ENCODE measurements at regions of chr11 and their contacts with region 1.

Region 1: GRCh38 chr11:11798586-11799438 is 43.0 kb upstream of the USP47 start:
- DNase-seq: peak; percentile 78
- ATAC-seq: peak; percentile 99
- H3K4me3 ChIP-seq: no peak overlapping the region
- H3K27ac ChIP-seq: no peak overlapping the region
- H3K4me1 ChIP-seq: peaks cover 2% of the 10 kb centered on the region
- H3K27me3 ChIP-seq: peaks cover 10% of the 10 kb centered on the region
- CTCF ChIP-seq: peak; percentile 90
- POLR2A ChIP-seq: 0 out of 2 replicates have a peak, but pooled peaks have one; percentile 31
- RAD21 ChIP-seq: peak; percentile 87

Region 2: DNA sequence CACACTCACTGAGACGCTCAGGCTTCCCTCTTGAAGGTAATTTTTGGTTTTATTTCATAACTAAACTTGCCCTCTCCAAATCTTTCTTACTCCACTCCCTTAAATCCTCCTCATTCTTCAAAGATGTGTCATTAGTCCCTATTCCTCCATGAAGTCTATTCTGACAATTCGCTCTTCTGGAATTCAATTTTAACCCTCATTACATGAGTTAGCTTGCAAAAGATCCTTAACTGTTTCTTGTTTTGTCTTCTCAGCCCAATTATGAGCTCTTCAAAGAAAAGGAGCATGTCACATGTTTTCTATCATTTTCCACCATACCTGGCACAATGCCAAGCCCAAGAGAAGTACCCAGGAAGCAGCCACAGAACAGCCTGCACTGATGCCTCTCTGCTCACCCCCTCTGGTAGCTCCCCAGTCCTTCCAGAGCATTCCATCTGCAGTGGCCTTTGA is 190.0 kb before region 1 on chr11:
- CTCF ChIA-PET with region 1: no interaction called
- POLR2A ChIA-PET with region 1: no interaction called
- dilution Hi-C with region 1: no loop called
- in situ Hi-C with region 1: no loop called
- intact Hi-C with region 1: no loop called
- DNase-seq: peak; percentile 71
- ATAC-seq: peak; percentile 86
- H3K4me3 ChIP-seq: no peak overlapping the region
- H3K27ac ChIP-seq: no peak overlapping the region
- H3K4me1 ChIP-seq: peaks cover 2% of the 10 kb centered on the region; the same call in 1 of the 2 replicates
- H3K27me3 ChIP-seq: no peaks in the 10 kb centered on the region; the same call in 1 of the 2 replicates
- CTCF ChIP-seq: no peak
- POLR2A ChIP-seq: no peak
- RAD21 ChIP-seq: no peak

Region 3: GRCh38 chr11:11841723-11842420 is 43.1 kb after region 1 on chr11 and contains the start of gene USP47:
- CTCF ChIA-PET with region 1: interaction called, 6 read pairs
- POLR2A ChIA-PET with region 1: no interaction called
- dilution Hi-C with region 1: no loop called
- in situ Hi-C with region 1: no loop called
- intact Hi-C with region 1: loop called (anchors 1 kb)
- DNase-seq: peak; percentile 70
- ATAC-seq: peak; percentile 79
- H3K4me3 ChIP-seq: peak within 1 kb of the TSS; percentile 98
- H3K27ac ChIP-seq: peak within 1 kb of the TSS; percentile 95
- H3K4me1 ChIP-seq: peaks cover 4% of the 10 kb centered on the region; the same call in 1 of the 2 replicates
- H3K27me3 ChIP-seq: no peaks in the 10 kb centered on the region
- CTCF ChIP-seq: peak; percentile 40; the same call in 1 of the 2 replicates
- POLR2A ChIP-seq: peak; percentile 80
- RAD21 ChIP-seq: 0 out of 2 replicates have a peak, but pooled peaks have one; percentile 14
- total RNA-seq, gene USP47: 110 and 117 TPM in 2 replicates

Region 4: GRCh38 chr11:11895672-11896071 is 96.9 kb after region 1 on chr11:
- CTCF ChIA-PET with region 1: no interaction called
- POLR2A ChIA-PET with region 1: no interaction called
- dilution Hi-C with region 1: no loop called
- in situ Hi-C with region 1: no loop called
- intact Hi-C with region 1: loop called (anchors 5 kb)
- DNase-seq: peak; percentile 10
- ATAC-seq: no peak
- H3K4me3 ChIP-seq: no peak overlapping the region
- H3K27ac ChIP-seq: no peak overlapping the region
- H3K4me1 ChIP-seq: no peaks in the 10 kb centered on the region
- H3K27me3 ChIP-seq: no peaks in the 10 kb centered on the region
- CTCF ChIP-seq: peak; percentile 26; the same call in 1 of the 2 replicates
- POLR2A ChIP-seq: no peak
- RAD21 ChIP-seq: no peak

Region 5: GRCh38 chr11:11916981-11917399 is 118.2 kb after region 1 on chr11:
- CTCF ChIA-PET with region 1: no interaction called
- POLR2A ChIA-PET with region 1: no interaction called
- dilution Hi-C with region 1: no loop called
- in situ Hi-C with region 1: no loop called
- intact Hi-C with region 1: loop called (anchors 5 kb)
- DNase-seq: peak; percentile 81
- ATAC-seq: peak; percentile 94
- H3K4me3 ChIP-seq: no peak overlapping the region
- H3K27ac ChIP-seq: no peak overlapping the region
- H3K4me1 ChIP-seq: peaks cover 3% of the 10 kb centered on the region; the same call in 1 of the 2 replicates
- H3K27me3 ChIP-seq: no peaks in the 10 kb centered on the region
- CTCF ChIP-seq: no peak
- POLR2A ChIP-seq: no peak
- RAD21 ChIP-seq: no peak

Region 6: GRCh38 chr11:11931461-11932055 is 132.7 kb after region 1 on chr11:
- CTCF ChIA-PET with region 1: no interaction called
- POLR2A ChIA-PET with region 1: no interaction called
- dilution Hi-C with region 1: no loop called
- in situ Hi-C with region 1: no loop called
- intact Hi-C with region 1: loop called (anchors 2 kb)
- DNase-seq: peak; percentile 74
- ATAC-seq: peak; percentile 53
- H3K4me3 ChIP-seq: no peak overlapping the region
- H3K27ac ChIP-seq: no peak overlapping the region
- H3K4me1 ChIP-seq: peaks cover 3% of the 10 kb centered on the region
- H3K27me3 ChIP-seq: no peaks in the 10 kb centered on the region
- CTCF ChIP-seq: peak; percentile 74
- POLR2A ChIP-seq: no peak
- RAD21 ChIP-seq: peak; percentile 78

Region 7: GRCh38 chr11:12029738-12030363 is 231.0 kb after region 1 on chr11:
- CTCF ChIA-PET with region 1: no interaction called
- POLR2A ChIA-PET with region 1: no interaction called
- dilution Hi-C with region 1: no loop called
- in situ Hi-C with region 1: loop called (anchors 5 kb)
- intact Hi-C with region 1: no loop called
- DNase-seq: peak; percentile 65
- ATAC-seq: peak; percentile 79
- H3K4me3 ChIP-seq: no peak overlapping the region
- H3K27ac ChIP-seq: no peak overlapping the region
- H3K4me1 ChIP-seq: peaks cover 8% of the 10 kb centered on the region
- H3K27me3 ChIP-seq: no peaks in the 10 kb centered on the region
- CTCF ChIP-seq: no peak
- POLR2A ChIP-seq: no peak
- RAD21 ChIP-seq: no peak; the same call in 1 of the 2 replicates